ENCODE measurements at regions of chr19 and their contacts with region 1.

Region 1: GRCh38 chr19:44570984-44571684 is 41.7 kb upstream of the CEACAM20 start:
- DNase-seq: peak; percentile 90
- H3K4me3 Mint-ChIP-seq: no peak overlapping the region
- H3K27ac Mint-ChIP-seq: no peak overlapping the region
- H3K4me1 Mint-ChIP-seq: peaks cover 6% of the 10 kb centered on the region
- H3K27me3 Mint-ChIP-seq: peaks cover 30% of the 10 kb centered on the region
- CTCF ChIP-seq: peak; percentile 78

Region 2: GRCh38 chr19:44582581-44583265 is 11.6 kb after region 1 on chr19:
- CTCF ChIA-PET with region 1: interaction called, 14 read pairs
- POLR2A ChIA-PET with region 1: no interaction called
- intact Hi-C with region 1: no loop called
- DNase-seq: peak; percentile 55
- H3K4me3 Mint-ChIP-seq: no peak overlapping the region
- H3K27ac Mint-ChIP-seq: no peak overlapping the region
- H3K4me1 Mint-ChIP-seq: peaks cover 12% of the 10 kb centered on the region
- H3K27me3 Mint-ChIP-seq: no peaks in the 10 kb centered on the region
- CTCF ChIP-seq: peak; percentile 56

Region 3: GRCh38 chr19:44635581-44636438 is 64.7 kb after region 1 on chr19:
- CTCF ChIA-PET with region 1: interaction called, 12 read pairs
- POLR2A ChIA-PET with region 1: no interaction called
- intact Hi-C with region 1: no loop called
- DNase-seq: peak; percentile 56
- H3K4me3 Mint-ChIP-seq: no peak overlapping the region
- H3K27ac Mint-ChIP-seq: peak overlapping the region; percentile 68
- H3K4me1 Mint-ChIP-seq: peaks cover 32% of the 10 kb centered on the region
- H3K27me3 Mint-ChIP-seq: no peaks in the 10 kb centered on the region
- CTCF ChIP-seq: no peak

Region 4: GRCh38 chr19:44662691-44663385 is 91.7 kb after region 1 on chr19:
- CTCF ChIA-PET with region 1: interaction called, 82 read pairs
- POLR2A ChIA-PET with region 1: no interaction called
- intact Hi-C with region 1: no loop called
- DNase-seq: no peak
- H3K4me3 Mint-ChIP-seq: no peak overlapping the region
- H3K27ac Mint-ChIP-seq: no peak overlapping the region
- H3K4me1 Mint-ChIP-seq: no peaks in the 10 kb centered on the region
- H3K27me3 Mint-ChIP-seq: no peaks in the 10 kb centered on the region
- CTCF ChIP-seq: no peak

Region 5: GRCh38 chr19:44954824-44955586 is 383.9 kb after region 1 on chr19 and contains the start of gene CLPTM1:
- CTCF ChIA-PET with region 1: no interaction called
- POLR2A ChIA-PET with region 1: no interaction called
- intact Hi-C with region 1: loop called (anchors 2 kb)
- DNase-seq: peak; percentile 97
- H3K4me3 Mint-ChIP-seq: peak within 1 kb of the TSS; percentile 89
- H3K27ac Mint-ChIP-seq: peak within 1 kb of the TSS; percentile 96
- H3K4me1 Mint-ChIP-seq: peaks cover 29% of the 10 kb centered on the region
- H3K27me3 Mint-ChIP-seq: no peaks in the 10 kb centered on the region
- CTCF ChIP-seq: no peak
- total RNA-seq, gene CLPTM1: 91.3 and 101 TPM in 2 replicates